CD4-positive, alpha-beta T cell (primary cell): ENCODE measurements at regions of chrX and their contacts with region 1.

Region 1: DNA sequence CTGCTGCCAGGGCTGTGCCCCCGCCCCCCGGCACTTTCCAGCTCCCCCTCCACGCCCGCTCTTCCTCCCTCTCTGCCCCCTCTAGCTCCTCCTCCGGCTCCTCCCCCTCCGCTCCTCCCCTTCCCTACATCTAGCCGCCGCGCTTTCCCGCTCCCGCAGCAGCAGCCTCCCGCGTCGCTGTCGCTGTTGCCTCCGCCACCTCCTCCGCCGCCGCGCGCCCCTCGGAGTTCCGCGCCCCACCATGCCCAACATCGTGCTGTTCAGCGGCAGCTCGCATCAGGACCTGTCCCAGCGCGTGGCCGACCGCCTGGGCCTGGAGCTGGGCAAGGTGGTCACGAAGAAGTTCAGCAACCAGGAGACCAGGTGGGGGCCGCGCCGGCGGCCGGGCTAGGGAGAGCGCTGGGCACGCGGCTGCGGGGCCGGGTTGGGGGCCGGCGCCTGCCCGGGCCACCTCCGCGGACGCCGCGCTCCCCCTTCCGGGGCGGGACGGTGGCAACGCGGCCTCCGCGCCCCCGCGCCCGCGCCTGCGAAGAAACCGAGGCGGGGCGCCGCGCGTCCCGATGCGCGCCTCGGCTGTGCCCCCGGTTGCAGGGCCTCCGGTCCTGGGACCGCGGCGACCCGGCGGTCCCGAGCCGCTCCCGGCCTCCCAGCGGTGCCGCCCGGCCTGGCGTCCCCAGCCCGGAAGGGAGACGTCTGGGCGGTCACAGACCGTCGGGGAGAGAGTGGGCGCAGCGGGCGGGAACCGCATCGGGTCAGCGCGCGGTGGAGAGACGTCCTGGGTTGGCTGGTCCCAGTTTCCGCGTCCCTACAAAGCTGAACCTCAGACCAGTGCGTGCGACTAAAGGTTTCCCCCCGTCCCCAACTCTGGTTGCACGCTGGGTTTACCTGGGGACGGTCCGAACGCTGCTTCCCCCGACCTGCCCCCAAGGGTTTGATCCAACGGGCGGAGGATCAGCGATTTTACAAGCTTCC is at the start of gene PRPS2:
- DNase-seq: peak; percentile 46 to 84 (median 68)
- ATAC-seq: peak; percentile 95
- H3K4me3 ChIP-seq: peak within 1 kb of the TSS; percentile 77
- H3K4me3 Mint-ChIP-seq: peak within 1 kb of the TSS; percentile 89
- H3K27ac ChIP-seq: no peak within 1 kb of the TSS
- H3K27ac Mint-ChIP-seq: peak within 1 kb of the TSS; percentile 78
- H3K4me1 ChIP-seq: peaks cover 12% of the 10 kb centered on the region
- H3K4me1 Mint-ChIP-seq: peaks cover 36% of the 10 kb centered on the region
- H3K27me3 ChIP-seq: no peaks in the 10 kb centered on the region
- H3K27me3 Mint-ChIP-seq: no peaks in the 10 kb centered on the region
- CTCF ChIP-seq: no peak
- total RNA-seq, gene PRPS2: 13.2 to 17.7 TPM

Region 2: DNA sequence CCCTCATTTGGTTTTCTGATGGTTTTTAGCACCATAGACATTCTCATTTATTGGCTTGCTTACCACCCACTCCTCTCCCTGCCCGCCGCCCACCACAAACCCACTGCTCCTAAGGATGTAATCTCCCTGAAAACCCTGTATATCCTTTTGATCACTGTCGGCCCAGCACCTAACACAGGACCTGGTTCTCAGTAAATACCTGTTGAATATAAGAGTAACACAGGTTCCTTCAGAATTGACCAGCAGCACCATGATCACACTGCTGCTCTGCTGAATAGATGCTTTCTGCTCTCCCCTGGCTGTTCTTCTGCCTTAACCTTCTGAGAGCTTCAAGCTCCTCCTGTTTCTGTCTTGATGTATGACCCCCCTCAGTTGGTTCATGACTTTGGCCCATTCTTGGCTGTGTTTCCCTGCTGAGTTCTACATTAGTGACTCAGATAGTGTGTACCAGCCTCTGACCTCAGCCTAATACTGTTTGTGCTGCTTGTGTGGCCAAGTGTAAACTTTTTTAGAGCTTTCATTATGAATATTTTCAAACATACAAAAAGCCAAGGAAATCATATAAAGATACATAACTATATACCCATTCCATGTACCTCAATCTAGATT is 388.0 kb before region 1 on chrX:
- CTCF ChIA-PET with region 1: no interaction called
- POLR2A ChIA-PET with region 1: no interaction called
- intact Hi-C with region 1: no loop called
- DNase-seq: no peak
- ATAC-seq: no peak
- H3K4me3 ChIP-seq: no peak overlapping the region
- H3K4me3 Mint-ChIP-seq: no peak overlapping the region
- H3K27ac ChIP-seq: no peak overlapping the region
- H3K27ac Mint-ChIP-seq: no peak overlapping the region
- H3K4me1 ChIP-seq: no peaks in the 10 kb centered on the region
- H3K4me1 Mint-ChIP-seq: no peaks in the 10 kb centered on the region
- H3K27me3 ChIP-seq: no peaks in the 10 kb centered on the region
- H3K27me3 Mint-ChIP-seq: no peaks in the 10 kb centered on the region
- CTCF ChIP-seq: no peak

Region 3: DNA sequence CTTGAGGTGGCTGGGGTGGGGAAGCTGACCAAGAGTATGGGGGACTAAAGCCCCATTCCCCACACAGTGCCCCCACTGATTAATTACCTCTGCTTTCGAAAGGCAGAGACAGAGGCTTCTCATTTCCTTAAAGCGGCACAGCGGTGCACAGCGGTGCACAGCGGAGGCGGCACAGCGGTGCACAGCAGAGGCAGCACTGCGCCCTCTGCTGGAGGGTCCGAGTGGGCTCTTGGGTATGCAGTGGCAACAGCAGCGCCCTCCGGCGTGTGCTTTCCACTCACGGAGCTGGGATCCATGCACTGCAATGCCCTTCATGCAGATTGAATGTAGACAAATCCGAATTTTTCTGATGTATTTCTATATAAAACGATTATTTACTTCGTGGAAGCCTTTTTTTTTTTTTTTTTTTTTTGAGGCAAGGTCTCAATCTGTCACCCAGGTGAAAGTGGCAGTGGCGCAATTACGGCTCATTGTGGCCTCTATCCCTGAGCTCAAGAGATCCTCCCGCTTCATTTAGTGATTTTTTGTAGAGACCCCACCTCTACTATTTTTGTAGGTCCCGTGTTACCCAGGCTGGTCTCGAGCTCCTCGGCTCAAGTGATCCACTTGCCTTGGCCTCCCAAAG is 20.0 kb before region 1 on chrX:
- CTCF ChIA-PET with region 1: interaction called, 9 read pairs
- POLR2A ChIA-PET with region 1: interaction called, 16 read pairs
- intact Hi-C with region 1: no loop called
- DNase-seq: peak; percentile 51 to 89 (median 66)
- ATAC-seq: peak; percentile 100
- H3K4me3 ChIP-seq: no peak overlapping the region
- H3K4me3 Mint-ChIP-seq: peak overlapping the region; percentile 48
- H3K27ac ChIP-seq: no peak overlapping the region
- H3K27ac Mint-ChIP-seq: no peak overlapping the region
- H3K4me1 ChIP-seq: peaks cover 6% of the 10 kb centered on the region
- H3K4me1 Mint-ChIP-seq: peaks cover 13% of the 10 kb centered on the region
- H3K27me3 ChIP-seq: peaks cover 0 to 3% of the 10 kb centered on the region in 2 experiments
- H3K27me3 Mint-ChIP-seq: peaks cover 4% of the 10 kb centered on the region
- CTCF ChIP-seq: peak; percentile 61